ENCODE measurements at regions of chr3 and their contacts with region 1.

Region 1: GRCh38 chr3:137013955-137014688 is 56.3 kb downstream of the IL20RB start:
- DNase-seq: peak; percentile 97
- H3K4me3 Mint-ChIP-seq: peak overlapping the region; percentile 68
- H3K27ac Mint-ChIP-seq: peak overlapping the region; percentile 34
- H3K4me1 Mint-ChIP-seq: peaks cover 14% of the 10 kb centered on the region
- H3K27me3 Mint-ChIP-seq: no peaks in the 10 kb centered on the region
- CTCF ChIP-seq: peak; percentile 97

Region 2: GRCh38 chr3:136305878-136306277 is 708.2 kb before region 1 on chr3:
- CTCF ChIA-PET with region 1: interaction called, 3 read pairs
- intact Hi-C with region 1: loop called (anchors 10 kb)
- DNase-seq: peak; percentile 33
- H3K4me3 Mint-ChIP-seq: no peak overlapping the region
- H3K27ac Mint-ChIP-seq: no peak overlapping the region
- H3K4me1 Mint-ChIP-seq: no peaks in the 10 kb centered on the region
- H3K27me3 Mint-ChIP-seq: no peaks in the 10 kb centered on the region
- CTCF ChIP-seq: peak; percentile 65

Region 3: DNA sequence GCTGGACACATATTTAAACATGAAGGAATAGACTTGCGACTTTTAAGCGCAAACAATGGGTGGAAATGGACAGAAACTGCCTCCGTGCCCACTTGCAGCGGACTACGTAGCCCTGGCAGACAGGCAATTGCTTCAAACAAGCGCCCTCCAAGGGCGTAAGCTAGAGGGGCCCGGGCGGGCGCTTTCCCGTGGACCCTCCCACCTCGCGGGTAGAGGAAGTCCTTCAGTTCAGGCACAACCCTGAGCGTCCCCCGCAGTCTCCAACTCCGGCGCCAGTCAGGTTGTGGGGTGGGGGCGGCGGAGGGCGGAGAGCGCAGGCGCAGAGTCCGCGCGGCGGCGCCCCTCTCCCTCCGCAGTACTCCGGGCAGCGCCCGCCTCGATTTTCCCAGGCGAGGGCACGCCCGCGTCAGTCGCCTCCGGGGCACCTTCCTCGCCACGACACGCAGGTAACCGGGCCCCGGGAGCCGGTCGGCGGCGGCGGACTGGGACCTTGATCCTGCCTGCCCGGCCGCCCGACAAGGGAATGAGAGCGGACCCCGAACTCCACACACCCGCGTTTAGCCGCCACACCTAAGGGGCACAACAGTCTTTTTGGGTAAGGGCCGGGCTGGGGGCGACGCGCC is 195.2 kb before region 1 on chr3 and contains the start of gene SLC35G2:
- CTCF ChIA-PET with region 1: interaction called, 3 read pairs
- intact Hi-C with region 1: loop called (anchors 1 kb)
- DNase-seq: peak; percentile 84
- H3K4me3 Mint-ChIP-seq: peak within 1 kb of the TSS; percentile 90
- H3K27ac Mint-ChIP-seq: peak within 1 kb of the TSS; percentile 92
- H3K4me1 Mint-ChIP-seq: peaks cover 27% of the 10 kb centered on the region
- H3K27me3 Mint-ChIP-seq: no peaks in the 10 kb centered on the region
- CTCF ChIP-seq: no peak
- total RNA-seq, gene SLC35G2: 31.0 and 31.4 TPM in 2 replicates

Region 4: DNA sequence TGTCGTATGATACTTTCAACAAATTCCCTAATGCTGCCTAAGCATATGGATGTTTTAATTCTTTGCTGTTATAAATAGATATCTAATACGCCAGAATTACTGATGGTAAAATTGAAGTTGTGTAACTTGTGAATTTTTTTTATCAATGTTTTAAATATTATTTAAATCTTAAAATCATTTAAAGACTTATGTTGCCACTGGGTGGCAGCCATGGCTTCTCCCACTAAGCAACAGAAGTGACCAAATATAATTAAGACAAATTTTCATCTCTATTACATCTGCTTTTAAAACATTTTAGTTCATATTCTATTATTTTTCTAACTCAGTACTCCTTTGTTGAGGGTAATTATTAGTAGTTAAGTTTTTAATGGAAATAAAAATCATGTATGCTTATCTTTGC is 64.4 kb before region 1 on chr3:
- CTCF ChIA-PET with region 1: interaction called, 7 read pairs
- intact Hi-C with region 1: loop called (anchors 1 kb)
- DNase-seq: no peak
- H3K4me3 Mint-ChIP-seq: no peak overlapping the region
- H3K27ac Mint-ChIP-seq: no peak overlapping the region
- H3K4me1 Mint-ChIP-seq: peaks cover 42% of the 10 kb centered on the region
- H3K27me3 Mint-ChIP-seq: no peaks in the 10 kb centered on the region
- CTCF ChIP-seq: peak; percentile 27

Measured in Calu3 (cell line).